HepG2 (cell line): ENCODE measurements at regions of chr15 and their contacts with region 1.

Region 1: GRCh38 chr15:59372352-59373211 is at the start of gene MYO1E:
- DNase-seq: peak; percentile 96
- ATAC-seq: peak; percentile 97
- H3K4me3 ChIP-seq: peak within 1 kb of the TSS; percentile 77 to 94 (median 87)
- H3K27ac ChIP-seq: peak within 1 kb of the TSS; percentile 75
- H3K4me1 ChIP-seq: peaks cover 37% of the 10 kb centered on the region
- H3K27me3 ChIP-seq: no peaks in the 10 kb centered on the region
- CTCF ChIP-seq: 0 out of 2 replicates have a peak, but pooled peaks have one; percentile 6
- EP300 ChIP-seq: no peak
- POLR2A ChIP-seq: peak; percentile 90 to 96
- RAD21 ChIP-seq: no peak
- total RNA-seq, gene MYO1E: 25.1 and 38.5 TPM in 2 replicates

Region 2: DNA sequence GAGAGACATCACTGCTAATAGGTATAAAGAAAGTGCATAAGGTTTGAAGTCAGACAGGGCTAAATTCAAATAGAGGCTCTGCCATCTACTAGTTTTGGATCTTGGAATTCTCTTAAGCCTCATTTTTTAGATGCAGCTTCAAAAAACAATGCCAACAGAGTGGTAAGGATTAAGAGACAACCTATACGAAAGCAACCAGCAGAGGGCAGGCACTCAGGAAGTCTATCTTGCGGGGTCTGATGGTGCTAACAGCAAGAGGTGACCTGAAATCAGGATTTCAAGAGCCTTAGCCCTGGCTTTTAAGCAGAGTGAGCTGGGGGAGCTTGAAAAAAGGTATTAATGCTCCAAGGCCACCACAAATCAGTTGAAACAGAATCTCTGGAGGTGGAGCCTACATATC is 125.2 kb before region 1 on chr15:
- CTCF ChIA-PET with region 1: interaction called, 3 read pairs
- POLR2A ChIA-PET with region 1: interaction called, 6 read pairs
- in situ Hi-C with region 1: no loop called
- intact Hi-C with region 1: loop called (anchors 2 kb)
- DNase-seq: peak; percentile 74
- ATAC-seq: peak; percentile 91
- H3K4me3 ChIP-seq: no peak overlapping the region
- H3K27ac ChIP-seq: no peak overlapping the region
- H3K4me1 ChIP-seq: peaks cover 6% of the 10 kb centered on the region
- H3K27me3 ChIP-seq: no peaks in the 10 kb centered on the region
- CTCF ChIP-seq: peak; percentile 74
- EP300 ChIP-seq: no peak
- POLR2A ChIP-seq: no peak
- RAD21 ChIP-seq: peak; percentile 59

Region 3: DNA sequence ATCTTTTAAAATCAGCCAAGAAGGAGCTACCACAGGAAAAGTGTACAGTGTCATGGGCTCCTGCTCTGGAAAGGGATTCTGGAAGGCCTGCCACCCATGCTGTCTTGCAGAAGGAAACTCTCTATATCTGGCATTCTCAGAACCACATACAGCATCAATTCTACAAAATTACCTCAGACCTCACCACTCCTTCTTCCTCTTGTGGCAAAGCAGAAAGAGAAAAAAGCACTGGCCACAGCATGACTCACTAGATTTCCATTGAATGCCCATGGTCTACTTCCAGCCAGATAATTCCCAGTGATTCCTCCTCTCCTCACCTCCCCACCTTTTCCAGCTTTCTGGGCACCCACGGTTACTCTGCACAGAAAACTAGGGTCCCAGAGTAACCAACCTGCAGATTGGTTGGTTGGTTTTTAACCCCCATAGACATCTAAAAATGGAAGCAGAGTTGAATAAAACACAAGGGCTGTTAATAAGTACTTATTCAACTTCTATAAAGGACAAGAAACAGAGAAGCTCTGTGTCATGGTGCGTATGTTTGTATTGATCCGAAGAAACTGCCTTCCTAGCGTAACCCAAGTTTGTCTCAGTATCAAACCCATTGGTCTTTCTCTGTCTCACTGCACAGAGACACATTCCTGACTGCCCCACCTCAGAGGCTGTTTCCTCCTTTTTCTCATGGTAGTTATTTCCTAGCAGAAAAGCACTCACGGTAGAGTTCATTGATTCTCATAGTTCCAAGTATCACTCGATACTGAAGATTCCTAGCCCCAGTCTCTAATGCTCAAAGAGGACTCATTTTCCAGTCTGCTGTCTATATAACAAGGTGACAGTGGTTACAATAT is 98.2 kb before region 1 on chr15:
- CTCF ChIA-PET with region 1: no interaction called
- POLR2A ChIA-PET with region 1: interaction called, 6 read pairs
- in situ Hi-C with region 1: no loop called
- intact Hi-C with region 1: loop called (anchors 2 kb)
- DNase-seq: no peak
- ATAC-seq: no peak
- H3K4me3 ChIP-seq: no peak overlapping the region
- H3K27ac ChIP-seq: no peak overlapping the region
- H3K4me1 ChIP-seq: peaks cover 68% of the 10 kb centered on the region
- H3K27me3 ChIP-seq: no peaks in the 10 kb centered on the region
- CTCF ChIP-seq: no peak
- EP300 ChIP-seq: no peak
- POLR2A ChIP-seq: no peak
- RAD21 ChIP-seq: no peak

Region 4: DNA sequence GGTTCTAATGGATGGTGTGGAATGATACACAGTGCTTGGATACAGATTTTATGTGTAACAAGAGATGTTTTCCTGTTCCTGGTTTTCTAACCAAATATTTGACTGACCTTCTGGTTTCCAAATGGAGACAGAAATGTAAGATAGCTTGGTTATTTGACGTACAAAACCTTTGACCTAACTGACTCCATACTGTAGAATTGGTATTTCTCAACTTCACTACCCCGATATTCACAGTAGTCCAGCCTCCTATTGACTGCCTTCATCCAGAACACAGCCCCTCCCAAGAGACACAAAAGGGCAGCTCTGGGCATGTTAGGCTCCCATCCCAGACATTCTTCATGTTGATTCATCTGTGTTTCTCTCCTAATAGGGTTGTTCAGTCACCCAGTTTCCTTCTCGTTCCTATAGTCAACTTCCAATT is 33.3 kb before region 1 on chr15:
- CTCF ChIA-PET with region 1: no interaction called
- POLR2A ChIA-PET with region 1: interaction called, 7 read pairs
- in situ Hi-C with region 1: no loop called
- intact Hi-C with region 1: loop called (anchors 5 kb)
- DNase-seq: peak; percentile 90
- ATAC-seq: peak; percentile 97
- H3K4me3 ChIP-seq: no peak overlapping the region
- H3K27ac ChIP-seq: peak overlapping the region; percentile 42
- H3K4me1 ChIP-seq: peaks cover 49% of the 10 kb centered on the region
- H3K27me3 ChIP-seq: no peaks in the 10 kb centered on the region
- CTCF ChIP-seq: no peak
- EP300 ChIP-seq: peak in 1 of 2 experiments; percentile 74; a peak in 2 of 4 replicates
- POLR2A ChIP-seq: no peak
- RAD21 ChIP-seq: peak; percentile 15; the same call in 1 of the 2 replicates

Region 5: DNA sequence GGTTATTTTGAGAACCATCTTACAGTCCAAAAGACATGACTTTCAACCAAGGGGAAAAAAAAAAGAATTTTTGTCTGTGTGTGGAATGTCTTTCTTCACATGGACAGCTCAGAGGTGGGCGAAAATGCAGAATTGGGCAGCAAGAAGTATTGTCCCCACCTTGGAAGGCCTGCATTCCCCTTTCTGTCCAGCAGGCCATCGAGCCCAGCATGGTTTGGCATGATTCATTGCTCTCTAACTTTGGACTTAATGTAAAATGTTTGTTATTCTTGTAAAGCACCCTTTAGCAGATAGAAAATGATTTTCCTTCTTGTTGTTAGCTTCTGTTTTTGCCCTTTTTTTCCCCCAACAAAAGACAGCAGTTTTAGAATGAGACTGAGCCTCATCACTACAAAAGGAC is 12.3 kb before region 1 on chr15:
- CTCF ChIA-PET with region 1: no interaction called
- POLR2A ChIA-PET with region 1: interaction called, 12 read pairs
- in situ Hi-C with region 1: no loop called
- intact Hi-C with region 1: no loop called
- DNase-seq: no peak
- ATAC-seq: peak; percentile 55; the same call in 2 of the 3 replicates
- H3K4me3 ChIP-seq: no peak overlapping the region
- H3K27ac ChIP-seq: no peak overlapping the region
- H3K4me1 ChIP-seq: peaks cover 11% of the 10 kb centered on the region
- H3K27me3 ChIP-seq: no peaks in the 10 kb centered on the region
- CTCF ChIP-seq: no peak
- EP300 ChIP-seq: no peak
- POLR2A ChIP-seq: no peak
- RAD21 ChIP-seq: no peak

Region 6: DNA sequence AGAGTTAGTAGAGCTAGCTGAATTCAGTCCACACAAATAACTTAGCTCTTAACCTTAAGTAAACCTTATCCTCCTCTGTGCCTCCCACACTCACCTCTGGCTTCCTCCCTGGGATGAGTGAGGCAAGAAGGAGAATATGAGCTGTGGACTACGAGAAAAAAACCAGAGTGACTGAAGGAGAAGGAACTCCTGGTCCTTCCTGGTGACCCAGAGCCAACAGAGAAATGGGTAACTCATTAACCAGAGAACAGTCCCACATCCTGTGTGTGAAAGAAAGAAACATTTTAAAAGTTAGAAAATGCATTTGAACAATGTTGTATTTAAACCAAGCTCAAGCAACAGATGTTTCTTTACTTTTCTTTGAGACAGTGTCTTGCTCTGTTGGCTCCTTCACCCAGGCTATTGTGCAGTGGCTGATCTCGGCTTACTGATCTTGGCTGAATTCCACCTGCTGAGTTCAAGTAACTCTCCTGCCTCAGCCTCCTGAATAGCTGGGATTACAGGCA is 37.9 kb after region 1 on chr15:
- CTCF ChIA-PET with region 1: no interaction called
- POLR2A ChIA-PET with region 1: interaction called, 6 read pairs
- in situ Hi-C with region 1: no loop called
- intact Hi-C with region 1: loop called (anchors 2 kb)
- DNase-seq: peak; percentile 31
- ATAC-seq: peak; percentile 37
- H3K4me3 ChIP-seq: peak overlapping the region in 2 of 3 experiments; percentile 19 to 36; a peak in 1 of 6 replicates
- H3K27ac ChIP-seq: no peak overlapping the region
- H3K4me1 ChIP-seq: peaks cover 47% of the 10 kb centered on the region
- H3K27me3 ChIP-seq: no peaks in the 10 kb centered on the region
- CTCF ChIP-seq: no peak
- EP300 ChIP-seq: no peak
- POLR2A ChIP-seq: no peak
- RAD21 ChIP-seq: no peak